GM12878 (cell line): ENCODE measurements at regions of chr12 and their contacts with region 1.

Region 1: GRCh38 chr12:49347384-49348237 is 923 bp downstream of the DNAJC22 start:
- DNase-seq: no peak
- ATAC-seq: peak; percentile 88
- H3K4me3 ChIP-seq: peak overlapping the region; percentile 49
- H3K27ac ChIP-seq: no peak overlapping the region
- H3K4me1 ChIP-seq: peaks cover 34% of the 10 kb centered on the region
- H3K27me3 ChIP-seq: peaks cover 13 to 22% of the 10 kb centered on the region in 2 experiments
- CTCF ChIP-seq: peak; percentile 85 to 96 (median 86)
- EP300 ChIP-seq: no peak
- POLR2A ChIP-seq: no peak
- RAD21 ChIP-seq: peak; percentile 47

Region 2: DNA sequence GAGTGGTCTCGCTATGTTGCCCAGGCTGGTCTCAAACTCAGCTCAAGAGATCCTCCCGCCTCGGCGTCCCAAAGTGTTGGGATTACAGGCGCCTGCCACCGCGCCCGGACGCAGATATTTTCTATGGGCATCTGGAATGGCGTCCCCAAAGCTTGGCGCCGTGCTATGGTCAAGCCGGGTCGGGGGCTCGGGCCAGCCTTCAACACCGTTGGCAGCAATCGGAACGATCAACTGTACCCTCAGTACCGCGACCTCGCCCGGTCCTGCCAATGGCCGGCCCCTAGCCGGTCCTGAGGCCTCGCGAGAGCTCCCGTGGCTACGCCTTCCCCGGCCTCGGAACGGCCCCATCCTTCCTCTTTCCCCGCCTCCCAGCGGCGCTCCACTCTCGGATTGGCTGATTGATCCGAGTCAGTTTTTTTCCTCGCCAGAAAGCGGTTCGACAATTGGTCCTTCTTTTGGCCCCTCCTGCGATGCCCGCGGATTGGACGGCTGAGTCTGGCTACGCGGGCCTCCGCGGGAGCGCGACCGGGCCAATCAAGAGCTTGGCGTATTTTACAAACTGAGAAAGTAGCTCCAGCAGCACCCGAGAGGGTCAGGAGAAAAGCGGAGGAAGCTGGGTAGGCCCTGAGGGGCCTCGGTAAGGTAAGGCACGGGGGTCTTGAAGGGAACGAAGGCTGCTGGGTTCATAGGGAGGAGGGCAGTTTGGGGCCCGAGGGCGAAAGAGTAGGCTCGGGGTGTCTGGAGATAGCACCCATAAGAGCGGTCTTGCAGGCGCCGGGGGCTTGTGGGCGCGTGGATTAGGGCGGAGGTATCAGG is 24.7 kb before region 1 on chr12 and contains the start of gene TROAP:
- CTCF ChIA-PET with region 1: interaction called, 37 read pairs
- POLR2A ChIA-PET with region 1: interaction called, 6 read pairs
- RAD21 ChIA-PET with region 1: interaction called, 15 read pairs
- SMC1A ChIA-PET with region 1: interaction called, 6 read pairs
- in situ Hi-C with region 1: no loop called
- intact Hi-C with region 1: no loop called
- DNase-seq: peak; percentile 96
- ATAC-seq: peak; percentile 99
- H3K4me3 ChIP-seq: peak within 1 kb of the TSS; percentile 95
- H3K27ac ChIP-seq: peak within 1 kb of the TSS; percentile 87
- H3K4me1 ChIP-seq: peaks cover 9% of the 10 kb centered on the region
- H3K27me3 ChIP-seq: no peaks in the 10 kb centered on the region
- CTCF ChIP-seq: no peak
- EP300 ChIP-seq: no peak
- POLR2A ChIP-seq: peak; percentile 95
- RAD21 ChIP-seq: no peak
- polyA plus RNA-seq, gene TROAP: 26.8 to 46.9 TPM

Region 3: DNA sequence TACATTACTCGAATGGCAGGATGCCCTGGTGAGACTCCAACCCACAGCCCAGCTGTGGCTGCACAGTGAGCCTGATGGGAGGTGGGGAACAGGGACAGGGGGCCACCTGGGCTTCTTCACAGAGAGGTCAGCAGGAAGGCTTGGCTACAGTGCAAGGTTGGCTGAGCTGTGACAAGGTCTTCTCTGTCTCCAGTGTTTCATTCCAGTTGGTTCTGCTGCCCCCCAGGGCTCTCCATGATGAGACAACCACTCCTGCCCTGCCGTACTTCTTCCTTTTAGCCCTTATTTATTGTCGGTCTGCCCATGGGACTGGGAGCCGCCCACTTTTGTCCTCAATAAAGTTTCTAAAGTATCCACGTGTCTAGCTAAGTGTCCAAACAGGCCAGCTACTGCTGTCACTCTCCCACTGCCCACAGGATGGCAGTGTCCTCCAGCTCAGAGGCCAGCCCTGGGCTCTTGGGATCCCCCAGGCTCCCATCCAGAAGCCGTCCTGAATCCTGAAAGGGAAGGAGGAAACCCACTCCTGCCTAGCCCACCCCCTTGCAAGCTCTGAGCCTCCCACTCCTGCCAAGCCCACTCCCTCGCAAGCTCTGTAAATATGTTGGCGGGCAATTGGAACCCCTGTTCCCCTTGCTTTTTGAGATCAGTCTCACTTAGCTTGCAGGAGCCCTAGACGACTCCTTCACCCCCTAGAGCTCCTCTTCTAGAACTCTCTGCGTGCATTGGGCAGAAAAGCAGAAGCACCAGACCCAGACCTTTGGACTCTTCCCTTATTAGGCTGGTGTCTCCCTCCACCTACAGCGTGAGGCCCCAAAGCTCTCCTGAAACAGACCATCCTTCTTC is 16.0 kb before region 1 on chr12:
- CTCF ChIA-PET with region 1: interaction called, 70 read pairs
- POLR2A ChIA-PET with region 1: interaction called, 9 read pairs
- RAD21 ChIA-PET with region 1: interaction called, 25 read pairs
- SMC1A ChIA-PET with region 1: interaction called, 22 read pairs
- in situ Hi-C with region 1: no loop called
- intact Hi-C with region 1: no loop called
- DNase-seq: no peak
- ATAC-seq: peak; percentile 85
- H3K4me3 ChIP-seq: no peak overlapping the region
- H3K27ac ChIP-seq: no peak overlapping the region
- H3K4me1 ChIP-seq: no peaks in the 10 kb centered on the region
- H3K27me3 ChIP-seq: peaks cover 3 to 12% of the 10 kb centered on the region in 2 experiments
- CTCF ChIP-seq: peak; percentile 55 to 68 (median 59)
- EP300 ChIP-seq: no peak
- POLR2A ChIP-seq: no peak
- RAD21 ChIP-seq: peak; percentile 58